Psoas muscle (tissue), 8 donors: ENCODE measurements at regions of chr5 and their contacts with region 1.

Region 1: GRCh38 chr5:78294248-78295034 is at the start of gene AP3B1:
- DNase-seq: peak; percentile 100
- ATAC-seq: peak; percentile 97 to 100 (median 98)
- H3K4me3 ChIP-seq: peak within 1 kb of the TSS; percentile 87
- H3K27ac ChIP-seq: peak within 1 kb of the TSS; percentile 88
- H3K4me1 ChIP-seq: peaks cover 14% of the 10 kb centered on the region
- H3K27me3 ChIP-seq: no peaks in the 10 kb centered on the region
- CTCF ChIP-seq: no peak
- total RNA-seq, gene AP3B1: 12.4 to 23.0 (median 15.5) TPM

Region 2: DNA sequence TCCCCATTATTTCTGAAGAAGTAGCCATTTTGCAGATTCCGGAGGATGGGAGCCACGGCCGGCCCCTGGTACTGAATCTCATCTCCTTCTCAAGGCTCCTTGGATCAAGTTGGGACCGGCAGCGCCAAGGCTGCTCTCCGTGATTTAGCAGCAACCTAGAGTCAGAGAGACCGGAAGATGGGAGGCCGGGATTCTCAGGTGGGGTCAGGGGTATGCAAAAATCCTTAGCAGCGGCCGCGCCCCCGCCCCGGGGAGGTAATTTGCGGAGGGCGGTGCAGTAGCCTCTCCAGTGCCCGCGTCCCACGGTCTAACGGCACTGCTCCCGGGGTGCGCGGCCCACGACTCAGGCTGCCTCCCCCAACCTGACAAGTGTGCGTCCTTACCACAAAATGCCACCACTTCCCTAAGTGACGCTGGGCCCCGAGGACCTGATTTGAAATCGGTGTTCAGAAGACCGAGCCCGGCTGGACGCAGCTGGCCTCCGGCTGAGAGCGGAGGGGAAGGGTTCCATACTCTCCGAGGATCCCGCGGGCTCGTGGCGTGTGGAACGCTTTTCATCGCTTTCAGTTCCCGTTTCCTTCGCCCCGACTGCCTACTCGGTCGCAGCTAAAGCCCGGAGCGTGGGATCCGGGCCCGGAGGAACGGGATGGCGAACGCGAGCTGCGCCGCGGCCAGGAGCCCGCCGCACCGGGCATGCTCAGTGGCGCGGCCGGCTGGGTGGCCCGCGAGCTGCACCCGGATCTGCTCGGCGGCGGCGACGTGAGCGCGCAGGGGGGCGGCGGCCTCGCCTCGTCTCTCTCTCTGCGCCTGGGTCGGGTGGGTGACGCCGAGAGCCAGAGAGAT is 65.6 kb after region 1 on chr5 and contains the start of gene SCAMP1:
- intact Hi-C with region 1: loop called (anchors 1 to 2 kb)
- DNase-seq: peak; percentile 94 to 95
- ATAC-seq: peak; percentile 97 to 98 (median 98)
- H3K4me3 ChIP-seq: peak within 1 kb of the TSS; percentile 96
- H3K27ac ChIP-seq: peak within 1 kb of the TSS; percentile 91
- H3K4me1 ChIP-seq: peaks cover 21% of the 10 kb centered on the region
- H3K27me3 ChIP-seq: no peaks in the 10 kb centered on the region
- CTCF ChIP-seq: peak; percentile 67
- total RNA-seq, gene SCAMP1: 16.4 to 28.4 (median 22.6) TPM